ENCODE measurements at regions of chr1 and their contacts with region 1.

Region 1: GRCh38 chr1:213122514-213122929 is 71.5 kb downstream of the RPS6KC1 start:
- DNase-seq: no peak
- ATAC-seq: no peak
- H3K4me3 ChIP-seq: no peak overlapping the region
- H3K27ac ChIP-seq: no peak overlapping the region
- H3K4me1 ChIP-seq: peaks cover 0 to 6% (median 0%) of the 10 kb centered on the region in 12 donors
- H3K27me3 ChIP-seq: no peaks in the 10 kb centered on the region
- CTCF ChIP-seq: peak; percentile 46 to 73 (median 65)
- POLR2A ChIP-seq: no peak

Region 2: GRCh38 chr1:213186168-213186567 is 63.6 kb after region 1 on chr1:
- intact Hi-C with region 1: no loop called
- DNase-seq: no peak
- ATAC-seq: no peak
- H3K4me3 ChIP-seq: no peak overlapping the region
- H3K27ac ChIP-seq: no peak overlapping the region
- H3K4me1 ChIP-seq: no peaks in the 10 kb centered on the region
- H3K27me3 ChIP-seq: no peaks in the 10 kb centered on the region
- CTCF ChIP-seq: no peak
- POLR2A ChIP-seq: no peak

Region 3: DNA sequence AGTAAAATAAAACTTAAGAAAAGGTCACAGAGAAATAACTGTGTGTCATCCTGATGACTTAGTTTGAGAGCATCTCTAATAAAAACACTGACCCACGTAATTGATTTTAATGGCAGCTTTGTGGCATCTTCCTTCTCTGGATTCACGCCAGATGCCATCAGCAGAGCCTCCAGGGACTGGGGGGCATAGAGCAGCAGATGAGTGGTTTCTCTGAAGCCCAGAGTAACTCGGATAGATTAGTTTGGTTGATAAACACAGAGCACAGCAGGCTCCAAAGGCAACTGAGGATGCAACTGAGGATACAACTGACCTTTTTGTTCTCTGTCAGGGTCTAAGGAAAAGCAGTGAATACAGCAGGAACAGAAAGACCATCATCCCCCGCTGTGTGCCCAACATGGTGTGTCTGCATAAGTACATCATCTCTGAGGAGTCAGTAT is 109.3 kb after region 1 on chr1:
- intact Hi-C with region 1: loop called in 2 of 10 experiments (anchors 10 kb)
- DNase-seq: no peak
- ATAC-seq: no peak
- H3K4me3 ChIP-seq: no peak overlapping the region
- H3K27ac ChIP-seq: no peak overlapping the region
- H3K4me1 ChIP-seq: no peaks in the 10 kb centered on the region
- H3K27me3 ChIP-seq: no peaks in the 10 kb centered on the region
- CTCF ChIP-seq: no peak
- POLR2A ChIP-seq: no peak

Region 4: DNA sequence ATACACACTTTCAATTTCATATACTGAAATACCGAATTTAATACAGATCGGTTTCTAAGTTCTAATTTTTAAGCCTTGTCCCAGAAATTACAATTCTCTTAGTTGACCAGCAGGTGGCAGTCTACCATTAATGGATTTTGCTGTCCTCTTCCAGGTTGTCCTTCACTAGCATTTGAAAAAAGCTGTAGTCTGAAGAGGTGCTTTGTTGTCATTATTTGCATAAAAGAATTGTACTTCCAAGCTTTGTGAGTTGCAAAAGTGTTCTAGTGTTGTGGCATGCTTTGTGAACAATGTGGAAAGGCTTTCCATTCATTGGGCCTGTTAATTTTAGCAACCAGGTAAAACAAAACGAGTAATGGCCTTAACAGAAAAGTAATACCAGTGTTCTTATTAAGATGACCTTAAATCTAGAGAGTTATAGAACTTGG is 122.2 kb after region 1 on chr1:
- intact Hi-C with region 1: loop called in 2 of 10 experiments (anchors 10 kb)
- DNase-seq: peak in 1 of 5 donors; percentile 29
- ATAC-seq: no peak
- H3K4me3 ChIP-seq: no peak overlapping the region
- H3K27ac ChIP-seq: no peak overlapping the region
- H3K4me1 ChIP-seq: no peaks in the 10 kb centered on the region
- H3K27me3 ChIP-seq: no peaks in the 10 kb centered on the region
- CTCF ChIP-seq: peak; percentile 71 to 88 (median 79)
- POLR2A ChIP-seq: no peak

Region 5: DNA sequence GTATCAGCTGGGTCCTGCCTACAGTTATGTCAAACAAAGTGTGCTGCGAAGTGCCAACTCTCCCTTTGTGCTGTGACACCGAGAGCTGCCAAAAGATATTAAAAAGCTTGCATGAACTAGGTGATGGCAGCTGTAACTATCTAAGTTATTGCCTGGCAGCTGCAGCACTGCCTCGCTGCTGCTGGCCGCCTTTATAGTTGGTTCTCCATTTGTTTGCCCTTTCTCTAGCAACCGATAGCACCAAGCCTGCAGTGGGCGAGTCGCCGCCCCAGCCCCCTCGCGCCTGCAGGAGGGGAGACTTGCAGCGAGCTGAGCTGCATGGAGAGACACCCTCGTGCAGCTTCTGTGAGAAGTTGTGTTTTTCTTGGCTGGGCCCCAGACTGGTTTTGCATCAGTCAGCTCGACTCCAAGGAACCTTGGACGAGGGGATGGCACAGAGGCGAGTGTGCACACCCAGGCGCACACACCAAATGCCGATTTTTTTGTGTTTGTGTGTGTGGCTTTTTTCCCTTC is 259.1 kb after region 1 on chr1:
- intact Hi-C with region 1: no loop called
- DNase-seq: peak in 4 of 5 donors; percentile 37 to 68 (median 50)
- ATAC-seq: peak; percentile 90 to 97 (median 95)
- H3K4me3 ChIP-seq: peak overlapping the region in 6 of 12 donors; percentile 7 to 36 (median 12)
- H3K27ac ChIP-seq: peak overlapping the region in 1 of 12 donors; percentile 3
- H3K4me1 ChIP-seq: peaks cover 0 to 10% (median 0%) of the 10 kb centered on the region in 12 donors
- H3K27me3 ChIP-seq: no peaks in the 10 kb centered on the region
- CTCF ChIP-seq: no peak
- POLR2A ChIP-seq: no peak

Measured in heart left ventricle (tissue), 16 donors.